OCI-LY7 (cell line): ENCODE measurements at regions of chr17 and their contacts with region 1.

Region 1: GRCh38 chr17:66165513-66166123 is 26.3 kb downstream of the CEP112 start:
- DNase-seq: peak; percentile 59
- H3K4me3 ChIP-seq: no peak overlapping the region
- H3K27ac ChIP-seq: no peak overlapping the region
- H3K4me1 ChIP-seq: no peaks in the 10 kb centered on the region
- CTCF ChIP-seq: peak; percentile 95

Region 2: GRCh38 chr17:65231662-65232335 is 933.8 kb before region 1 on chr17:
- CTCF ChIA-PET with region 1: no interaction called
- POLR2A ChIA-PET with region 1: interaction called, 3 read pairs
- intact Hi-C with region 1: loop called (anchors 5 kb)
- DNase-seq: peak; percentile 71
- H3K4me3 ChIP-seq: no peak overlapping the region
- H3K27ac ChIP-seq: no peak overlapping the region
- H3K4me1 ChIP-seq: no peaks in the 10 kb centered on the region
- CTCF ChIP-seq: peak; percentile 85

Region 3: GRCh38 chr17:65556014-65556909 is 609.4 kb before region 1 on chr17:
- CTCF ChIA-PET with region 1: no interaction called
- POLR2A ChIA-PET with region 1: no interaction called
- intact Hi-C with region 1: loop called (anchors 10 kb)
- DNase-seq: peak; percentile 75
- H3K4me3 ChIP-seq: no peak overlapping the region
- H3K27ac ChIP-seq: no peak overlapping the region
- H3K4me1 ChIP-seq: peaks cover 12% of the 10 kb centered on the region
- CTCF ChIP-seq: peak; percentile 95

Region 4: GRCh38 chr17:65988081-65988850 is 177.4 kb before region 1 on chr17:
- CTCF ChIA-PET with region 1: no interaction called
- POLR2A ChIA-PET with region 1: no interaction called
- intact Hi-C with region 1: loop called (anchors 5 kb)
- DNase-seq: peak; percentile 38
- H3K4me3 ChIP-seq: no peak overlapping the region
- H3K27ac ChIP-seq: no peak overlapping the region
- H3K4me1 ChIP-seq: no peaks in the 10 kb centered on the region
- CTCF ChIP-seq: peak; percentile 82